Colonic mucosa (tissue), 4 donors: ENCODE measurements at regions of chr15 and their contacts with region 1.

Region 1: DNA sequence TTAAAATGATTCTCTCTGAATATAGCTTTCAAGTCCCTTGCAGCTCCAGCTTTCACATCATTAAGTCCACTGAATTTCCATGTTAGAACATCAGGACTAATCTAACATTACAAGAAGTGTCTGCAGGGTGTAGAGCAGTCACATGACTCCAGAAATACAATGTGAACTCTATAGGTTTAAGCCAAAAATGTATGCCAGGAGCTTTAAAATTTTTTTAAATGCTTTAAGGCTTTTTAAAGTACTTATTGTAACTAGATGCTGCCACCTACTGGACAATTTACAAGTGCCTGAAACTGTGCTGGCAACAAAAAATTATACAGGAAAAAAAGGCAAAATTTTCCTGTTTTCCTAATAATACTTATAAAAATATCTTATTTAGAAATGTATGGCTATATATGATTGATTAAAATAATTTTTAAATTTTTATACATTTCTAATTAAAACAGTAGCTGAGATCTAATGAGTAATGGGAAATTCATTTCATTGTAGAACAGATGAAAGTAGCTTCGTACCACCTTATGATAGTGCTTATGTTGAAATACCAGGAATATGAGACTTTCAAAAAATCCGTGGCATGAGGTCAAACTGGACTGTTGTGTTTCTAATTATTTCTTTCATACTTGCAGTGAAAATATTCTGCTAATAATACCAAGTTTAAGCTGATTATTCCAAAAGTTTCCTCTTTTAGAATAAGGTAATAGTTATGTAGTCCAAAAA is 25.7 kb downstream of the FSIP1 start:
- DNase-seq: peak; percentile 48
- H3K4me3 ChIP-seq: no peak overlapping the region
- H3K27ac ChIP-seq: no peak overlapping the region
- H3K4me1 ChIP-seq: no peaks in the 10 kb centered on the region
- H3K27me3 ChIP-seq: no peaks in the 10 kb centered on the region
- CTCF ChIP-seq: peak; percentile 90

Region 2: DNA sequence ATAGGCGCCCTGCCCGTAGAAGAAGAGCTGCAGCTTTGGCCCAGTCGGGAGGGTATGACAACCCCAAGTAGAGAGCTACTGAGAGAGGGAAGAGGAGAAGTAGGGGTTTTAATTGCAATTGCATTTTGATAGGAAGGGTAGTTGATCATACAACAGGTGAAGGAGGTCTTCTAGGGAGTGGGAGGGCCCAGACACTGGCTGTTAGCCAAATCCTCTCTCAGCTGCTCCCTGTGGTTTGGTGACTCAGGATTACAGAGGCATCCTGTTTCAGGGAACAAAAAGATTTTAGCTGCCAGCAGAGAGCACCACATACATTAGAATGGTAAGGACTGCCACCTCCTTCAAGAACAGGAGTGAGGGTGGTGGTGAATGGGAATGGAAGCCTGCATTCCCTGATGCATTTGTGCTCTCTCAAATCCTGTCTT is 585.0 kb before region 1 on chr15:
- intact Hi-C with region 1: loop called (anchors 5 kb)
- DNase-seq: peak; percentile 54
- H3K4me3 ChIP-seq: no peak overlapping the region
- H3K27ac ChIP-seq: peak overlapping the region; percentile 25
- H3K4me1 ChIP-seq: no peaks in the 10 kb centered on the region
- H3K27me3 ChIP-seq: no peaks in the 10 kb centered on the region
- CTCF ChIP-seq: peak; percentile 21

Region 3: DNA sequence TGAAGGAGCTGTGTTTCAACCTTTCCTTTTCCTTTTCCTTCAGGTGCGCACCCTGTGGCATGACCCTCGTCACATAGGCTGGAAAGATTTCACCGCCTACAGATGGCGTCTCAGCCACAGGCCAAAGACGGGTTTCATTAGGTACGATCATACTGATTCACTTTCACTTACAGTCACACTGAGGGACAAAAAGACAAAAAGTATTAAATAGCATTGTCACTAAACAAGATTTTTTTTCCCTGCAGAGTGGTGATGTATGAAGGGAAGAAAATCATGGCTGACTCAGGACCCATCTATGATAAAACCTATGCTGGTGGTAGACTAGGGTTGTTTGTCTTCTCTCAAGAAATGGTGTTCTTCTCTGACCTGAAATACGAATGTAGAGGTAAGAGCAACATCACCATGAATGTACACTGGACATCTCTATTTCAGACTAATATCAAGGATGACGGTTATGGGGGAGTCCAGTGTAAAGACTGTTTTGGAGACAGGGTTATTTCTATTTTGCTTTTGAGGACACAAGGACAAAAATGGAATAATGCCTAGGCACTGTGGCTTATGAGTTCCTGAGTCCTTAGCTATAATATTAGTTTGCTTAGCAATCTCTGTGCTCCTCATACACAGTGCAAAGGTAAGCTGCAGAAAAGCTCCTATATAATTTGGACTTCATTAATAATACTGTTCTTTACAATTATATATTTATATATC is 162.8 kb before region 1 on chr15:
- intact Hi-C with region 1: loop called (anchors 5 kb)
- DNase-seq: peak; percentile 68
- H3K4me3 ChIP-seq: no peak overlapping the region
- H3K27ac ChIP-seq: peak overlapping the region; percentile 10
- H3K4me1 ChIP-seq: peaks cover 8% of the 10 kb centered on the region
- H3K27me3 ChIP-seq: no peaks in the 10 kb centered on the region
- CTCF ChIP-seq: peak; percentile 25

Region 4: GRCh38 chr15:39686000-39686613 is 70.9 kb before region 1 on chr15:
- intact Hi-C with region 1: loop called (anchors 5 kb)
- DNase-seq: peak; percentile 54
- H3K4me3 ChIP-seq: no peak overlapping the region
- H3K27ac ChIP-seq: no peak overlapping the region
- H3K4me1 ChIP-seq: no peaks in the 10 kb centered on the region
- H3K27me3 ChIP-seq: no peaks in the 10 kb centered on the region
- CTCF ChIP-seq: peak; percentile 77